Activated T-helper 2 cell treated with anti-CD3 and anti-CD28 coated beads, Interferon-gamma antibody, Interleukin-2, Interleukin-4, amounts not matched to agents 10 μg/mL and 5 μg/mL and 100 μg/mL, durations not matched to agents 14 hours and 24 hours and 36 hours (primary cell): ENCODE measurements at regions of chr4 and their contacts with region 1.

Region 1: GRCh38 chr4:185039508-185040273 is 21.4 kb downstream of the HELT start:
- DNase-seq: peak; percentile 39
- H3K4me3 Mint-ChIP-seq: peak overlapping the region; percentile 38
- H3K27ac Mint-ChIP-seq: no peak overlapping the region
- H3K4me1 Mint-ChIP-seq: peaks cover 4% of the 10 kb centered on the region
- H3K27me3 Mint-ChIP-seq: peaks cover 21% of the 10 kb centered on the region

Region 2: DNA sequence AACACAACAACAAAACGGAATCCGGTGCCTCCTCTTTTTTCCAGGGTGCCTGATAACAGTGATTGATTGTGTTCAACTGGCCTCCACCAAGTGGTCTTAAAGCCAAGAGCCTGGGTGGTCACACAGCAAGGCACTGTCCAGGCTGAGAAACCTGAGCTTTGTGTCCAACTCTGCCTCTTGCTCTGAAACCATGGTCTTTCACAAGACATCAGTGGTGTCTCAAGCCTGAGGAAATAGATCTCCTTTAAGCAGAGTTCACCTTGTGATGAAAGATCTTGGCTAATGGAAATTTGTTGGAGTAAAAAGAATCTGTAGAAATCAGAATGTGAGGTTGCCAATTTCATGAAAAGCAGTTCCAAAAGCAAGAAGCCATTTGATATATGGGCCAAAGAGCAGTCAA is 166.6 kb before region 1 on chr4:
- intact Hi-C with region 1: no loop called
- DNase-seq: no peak
- H3K4me3 Mint-ChIP-seq: no peak overlapping the region
- H3K27ac Mint-ChIP-seq: no peak overlapping the region
- H3K4me1 Mint-ChIP-seq: no peaks in the 10 kb centered on the region
- H3K27me3 Mint-ChIP-seq: peaks cover 15% of the 10 kb centered on the region

Region 3: GRCh38 chr4:185096032-185096653 is 56.5 kb after region 1 on chr4:
- intact Hi-C with region 1: loop called (anchors 5 kb)
- DNase-seq: no peak
- H3K4me3 Mint-ChIP-seq: no peak overlapping the region
- H3K27ac Mint-ChIP-seq: no peak overlapping the region
- H3K4me1 Mint-ChIP-seq: no peaks in the 10 kb centered on the region
- H3K27me3 Mint-ChIP-seq: peaks cover 24% of the 10 kb centered on the region

Region 4: DNA sequence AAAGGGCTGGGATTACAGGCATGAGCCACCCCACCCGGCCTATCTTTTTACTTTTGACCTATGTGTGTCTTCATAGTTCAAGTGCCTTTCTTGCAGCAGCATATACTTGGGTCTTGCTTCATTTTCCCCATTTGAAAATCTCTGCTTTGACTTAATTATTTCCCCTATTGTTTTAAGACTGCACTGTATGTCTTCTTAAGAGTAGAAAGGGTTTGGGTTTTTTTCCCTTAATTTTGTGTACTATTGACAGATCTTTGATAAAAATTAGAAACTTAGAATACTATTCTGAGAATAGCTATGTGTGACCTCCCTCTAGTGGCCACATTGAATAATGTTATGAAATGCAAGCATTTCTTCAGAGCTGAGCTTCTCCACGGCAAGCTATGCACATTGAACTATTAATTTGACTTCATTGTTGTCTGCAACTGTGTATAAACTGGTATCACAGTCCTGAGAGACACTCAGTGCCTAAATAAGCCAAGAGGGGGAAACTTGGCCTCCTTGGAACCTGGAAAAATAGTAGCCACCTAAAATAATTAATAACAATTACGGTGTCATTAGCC is 94.7 kb after region 1 on chr4:
- intact Hi-C with region 1: loop called (anchors 1 kb)
- DNase-seq: no peak
- H3K4me3 Mint-ChIP-seq: no peak overlapping the region
- H3K27ac Mint-ChIP-seq: no peak overlapping the region
- H3K4me1 Mint-ChIP-seq: no peaks in the 10 kb centered on the region
- H3K27me3 Mint-ChIP-seq: peaks cover 41% of the 10 kb centered on the region

Region 5: DNA sequence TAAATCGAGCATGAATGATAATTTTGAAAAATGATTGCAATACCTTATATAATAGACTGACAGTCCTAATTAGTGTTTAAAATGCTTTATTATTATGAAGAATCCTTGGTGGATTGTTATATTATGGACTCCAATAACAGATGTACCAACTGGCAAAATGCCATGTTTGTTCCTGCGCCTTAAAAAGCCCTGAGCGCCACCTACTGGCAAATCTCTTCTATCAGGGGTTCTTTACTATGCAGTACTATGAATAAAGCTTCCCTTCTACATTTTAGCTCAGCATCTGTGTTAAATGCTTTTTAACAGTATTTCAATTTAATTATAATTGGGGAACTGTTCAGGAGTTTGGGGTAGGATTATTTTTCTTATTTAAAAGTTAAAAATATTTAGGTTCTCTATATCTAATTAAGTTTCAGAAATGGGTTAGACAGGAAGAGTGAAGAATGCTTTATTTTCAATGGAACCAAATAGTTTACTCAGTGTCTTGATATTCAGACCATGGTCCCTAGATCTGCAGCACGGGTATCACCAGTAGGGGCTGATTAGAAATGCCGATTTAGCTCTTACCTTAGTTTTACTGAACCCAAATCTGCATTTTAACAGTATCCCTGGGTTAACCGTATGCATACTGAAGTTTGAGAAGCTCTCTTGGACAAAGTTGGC is 144.1 kb after region 1 on chr4:
- intact Hi-C with region 1: loop called (anchors 1 kb)
- DNase-seq: peak; percentile 49
- H3K4me3 Mint-ChIP-seq: no peak overlapping the region
- H3K27ac Mint-ChIP-seq: no peak overlapping the region
- H3K4me1 Mint-ChIP-seq: peaks cover 14% of the 10 kb centered on the region
- H3K27me3 Mint-ChIP-seq: no peaks in the 10 kb centered on the region

Region 6: DNA sequence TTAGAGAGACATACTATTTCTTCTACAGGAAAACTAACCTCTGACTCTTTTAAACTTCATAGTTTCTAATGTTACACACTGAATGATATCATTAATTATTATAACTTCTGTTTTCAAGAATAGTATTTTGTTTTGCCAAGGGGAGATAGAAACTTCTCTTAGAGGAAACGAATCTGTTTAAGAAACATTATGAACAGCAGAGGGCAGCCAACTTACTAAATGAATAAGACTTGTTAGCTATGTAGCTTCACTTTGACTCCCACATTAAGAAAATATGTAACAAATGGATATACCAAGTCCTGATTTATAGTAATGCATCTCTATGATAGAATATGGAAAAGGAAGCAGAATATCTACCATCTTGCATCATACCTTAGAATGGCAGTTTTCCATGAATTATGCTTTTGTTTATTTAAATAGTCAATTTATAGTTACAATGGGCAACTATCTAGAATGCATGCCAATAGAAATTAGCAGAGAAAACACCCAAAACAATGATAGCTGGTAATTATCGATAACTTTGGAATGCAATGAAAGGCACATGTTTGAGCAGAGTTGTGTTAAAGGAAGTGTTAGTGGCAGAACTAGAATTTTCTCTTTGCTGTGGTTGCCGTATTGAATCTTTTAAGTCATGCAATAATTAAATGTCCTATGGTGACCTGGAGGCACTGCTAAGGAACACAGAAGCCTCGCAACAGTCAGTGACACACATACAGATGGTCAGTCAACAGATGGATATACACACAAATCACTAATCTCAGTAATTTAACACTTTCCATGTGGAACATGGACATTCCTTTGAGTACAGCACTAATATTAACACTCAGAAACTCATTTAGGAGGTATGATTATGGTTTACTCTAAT is 601.4 kb after region 1 on chr4:
- intact Hi-C with region 1: no loop called
- DNase-seq: no peak
- H3K4me3 Mint-ChIP-seq: no peak overlapping the region
- H3K27ac Mint-ChIP-seq: no peak overlapping the region
- H3K4me1 Mint-ChIP-seq: no peaks in the 10 kb centered on the region
- H3K27me3 Mint-ChIP-seq: peaks cover 32% of the 10 kb centered on the region